CD4-positive, alpha-beta T cell (primary cell): ENCODE measurements at regions of chr15 and their contacts with region 1.

Region 1: GRCh38 chr15:69755551-69756310 is 303.1 kb downstream of the RPLP1 start:
- DNase-seq: peak; percentile 29 to 88 (median 68)
- ATAC-seq: peak; percentile 57
- H3K4me3 ChIP-seq: peak overlapping the region; percentile 15
- H3K4me3 Mint-ChIP-seq: peak overlapping the region; percentile 73
- H3K27ac ChIP-seq: no peak overlapping the region
- H3K27ac Mint-ChIP-seq: peak overlapping the region; percentile 77
- H3K4me1 ChIP-seq: peaks cover 71% of the 10 kb centered on the region
- H3K4me1 Mint-ChIP-seq: peaks cover 94% of the 10 kb centered on the region
- H3K27me3 ChIP-seq: no peaks in the 10 kb centered on the region
- H3K27me3 Mint-ChIP-seq: peaks cover 6% of the 10 kb centered on the region
- CTCF ChIP-seq: no peak

Region 2: GRCh38 chr15:69743091-69743490 is 12.6 kb before region 1 on chr15:
- CTCF ChIA-PET with region 1: interaction called, 3 read pairs
- POLR2A ChIA-PET with region 1: interaction called, 11 read pairs
- intact Hi-C with region 1: no loop called
- DNase-seq: peak in 1 of 14 experiments; percentile 3
- ATAC-seq: no peak
- H3K4me3 ChIP-seq: no peak overlapping the region
- H3K4me3 Mint-ChIP-seq: no peak overlapping the region
- H3K27ac ChIP-seq: no peak overlapping the region
- H3K27ac Mint-ChIP-seq: no peak overlapping the region
- H3K4me1 ChIP-seq: peaks cover 14% of the 10 kb centered on the region
- H3K4me1 Mint-ChIP-seq: peaks cover 34% of the 10 kb centered on the region
- H3K27me3 ChIP-seq: peaks cover 0 to 3% of the 10 kb centered on the region in 2 experiments
- H3K27me3 Mint-ChIP-seq: peaks cover 26% of the 10 kb centered on the region
- CTCF ChIP-seq: no peak

Region 3: GRCh38 chr15:69793781-69794451 is 38.2 kb after region 1 on chr15:
- CTCF ChIA-PET with region 1: no interaction called
- POLR2A ChIA-PET with region 1: no interaction called
- intact Hi-C with region 1: no loop called
- DNase-seq: no peak
- ATAC-seq: no peak
- H3K4me3 ChIP-seq: no peak overlapping the region
- H3K4me3 Mint-ChIP-seq: no peak overlapping the region
- H3K27ac ChIP-seq: no peak overlapping the region
- H3K27ac Mint-ChIP-seq: no peak overlapping the region
- H3K4me1 ChIP-seq: no peaks in the 10 kb centered on the region
- H3K4me1 Mint-ChIP-seq: no peaks in the 10 kb centered on the region
- H3K27me3 ChIP-seq: peaks cover 0 to 6% of the 10 kb centered on the region in 2 experiments
- H3K27me3 Mint-ChIP-seq: peaks cover 3% of the 10 kb centered on the region
- CTCF ChIP-seq: no peak

Region 4: GRCh38 chr15:69804786-69805185 is 49.1 kb after region 1 on chr15:
- CTCF ChIA-PET with region 1: no interaction called
- POLR2A ChIA-PET with region 1: no interaction called
- intact Hi-C with region 1: loop called in 1 of 2 experiments (anchors 5 kb)
- DNase-seq: peak in 2 of 14 experiments; percentile 25 to 29
- ATAC-seq: no peak
- H3K4me3 ChIP-seq: no peak overlapping the region
- H3K4me3 Mint-ChIP-seq: no peak overlapping the region
- H3K27ac ChIP-seq: no peak overlapping the region
- H3K27ac Mint-ChIP-seq: no peak overlapping the region
- H3K4me1 ChIP-seq: peaks cover 7% of the 10 kb centered on the region
- H3K4me1 Mint-ChIP-seq: peaks cover 5% of the 10 kb centered on the region
- H3K27me3 ChIP-seq: no peaks in the 10 kb centered on the region
- H3K27me3 Mint-ChIP-seq: peaks cover 8% of the 10 kb centered on the region
- CTCF ChIP-seq: no peak